GM18951 (cell line): ENCODE measurements at regions of chr11 and their contacts with region 1.

Region 1: DNA sequence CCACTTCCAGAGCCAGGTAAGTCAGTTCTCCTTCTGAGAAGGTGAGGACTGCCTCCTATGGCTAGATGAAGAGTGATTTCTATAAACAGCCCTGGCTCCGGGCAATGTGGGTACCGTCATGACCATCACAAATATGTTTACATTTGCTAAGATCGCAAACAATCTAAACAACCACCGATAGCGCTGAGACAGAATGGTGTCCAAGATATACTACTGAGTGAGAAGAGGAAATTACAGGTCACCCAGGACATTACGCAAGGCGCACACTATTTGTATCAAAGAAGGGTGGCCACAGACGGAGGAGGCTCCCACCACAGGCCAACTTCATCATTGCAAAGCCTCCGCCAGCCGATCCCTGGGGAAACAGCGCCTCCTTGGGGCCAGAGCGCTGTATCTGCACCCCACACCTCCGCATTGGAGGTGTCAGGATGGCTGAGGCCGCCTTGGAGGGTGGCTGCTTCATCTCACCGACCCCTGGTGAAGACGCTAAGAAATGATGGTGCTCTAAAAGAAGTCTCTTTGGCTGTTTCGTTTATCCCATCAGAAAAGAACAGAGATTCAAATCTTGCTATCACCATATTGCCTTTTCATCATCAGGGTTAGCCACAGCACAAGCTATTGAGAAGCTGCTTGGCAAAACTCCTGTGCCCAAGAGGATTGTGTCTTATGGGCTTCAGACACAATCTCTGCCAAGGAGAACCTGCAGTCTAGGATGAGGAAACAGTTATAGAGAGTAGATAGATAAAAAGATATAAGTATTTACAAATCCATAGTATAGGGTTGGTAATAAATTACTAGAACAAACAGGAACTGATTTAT is 12.3 kb upstream of the ASRGL1 start:
- POLR2A ChIP-seq: no peak

Region 2: GRCh38 chr11:62123669-62124185 is 201.2 kb before region 1 on chr11 and contains the start of gene INCENP:
- in situ Hi-C with region 1: no loop called
- POLR2A ChIP-seq: peak; percentile 67

Region 3: DNA sequence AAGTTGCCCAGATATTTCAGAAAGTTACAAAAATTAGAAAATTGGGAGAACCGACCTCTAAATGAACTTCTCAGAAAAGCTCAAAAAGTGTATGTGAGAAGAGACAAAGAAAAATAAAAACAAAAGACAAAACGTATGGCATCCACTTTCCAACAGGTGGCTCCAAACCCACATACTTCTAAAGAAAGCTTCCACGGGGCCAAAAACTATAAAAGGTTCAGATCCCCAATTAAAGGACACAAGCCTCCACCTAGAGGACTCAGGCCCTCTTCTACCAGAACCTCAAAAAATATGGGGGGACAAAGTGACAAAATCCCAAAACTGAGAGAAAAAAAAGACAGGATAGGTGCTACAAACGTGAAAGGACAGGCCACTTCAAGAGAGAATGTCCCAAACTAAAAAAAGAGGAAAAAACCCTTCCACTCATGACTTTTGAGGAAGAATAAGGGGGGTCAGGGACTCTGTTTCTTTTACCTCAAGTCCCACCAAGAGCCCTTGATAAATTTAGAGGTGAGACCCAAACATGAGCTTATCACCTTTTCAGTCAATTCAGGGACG is 107.7 kb before region 1 on chr11:
- in situ Hi-C with region 1: loop called (anchors 25 kb)
- POLR2A ChIP-seq: no peak

Region 4: DNA sequence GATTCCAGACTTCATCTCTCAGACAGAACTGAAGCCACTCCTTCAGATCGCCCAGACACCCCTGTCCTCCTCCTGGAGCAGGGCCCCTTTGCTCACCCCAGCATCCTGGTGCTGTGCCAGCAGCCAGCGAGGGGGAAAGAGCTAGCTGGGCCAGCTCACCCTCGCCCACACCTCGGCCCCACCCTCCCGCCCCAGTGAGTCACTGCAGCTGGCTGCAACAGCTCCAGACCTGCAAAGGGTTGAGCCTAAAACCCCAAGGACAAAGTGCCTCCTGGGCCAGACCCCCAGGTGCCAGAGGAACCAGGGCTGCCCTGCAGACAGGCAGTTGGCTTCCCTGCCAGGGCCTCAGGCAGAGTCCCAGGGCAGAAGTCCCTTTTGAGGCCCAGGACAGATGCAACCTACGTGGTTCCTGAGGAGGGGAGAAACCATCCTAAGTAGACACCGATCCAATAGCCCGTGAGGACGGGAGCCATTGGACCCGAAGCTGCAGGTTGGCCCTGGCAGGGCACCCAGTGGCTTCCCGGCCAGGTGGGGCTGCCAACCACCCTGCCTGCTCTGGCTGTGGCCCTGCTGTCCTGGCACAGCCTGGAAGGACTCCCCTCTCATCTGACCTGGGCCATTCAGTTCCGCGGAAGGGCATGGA is 214.4 kb after region 1 on chr11:
- in situ Hi-C with region 1: no loop called
- POLR2A ChIP-seq: no peak